Adrenal gland (tissue), 19 donors: ENCODE measurements at regions of chr6 and their contacts with region 1.

Region 1: DNA sequence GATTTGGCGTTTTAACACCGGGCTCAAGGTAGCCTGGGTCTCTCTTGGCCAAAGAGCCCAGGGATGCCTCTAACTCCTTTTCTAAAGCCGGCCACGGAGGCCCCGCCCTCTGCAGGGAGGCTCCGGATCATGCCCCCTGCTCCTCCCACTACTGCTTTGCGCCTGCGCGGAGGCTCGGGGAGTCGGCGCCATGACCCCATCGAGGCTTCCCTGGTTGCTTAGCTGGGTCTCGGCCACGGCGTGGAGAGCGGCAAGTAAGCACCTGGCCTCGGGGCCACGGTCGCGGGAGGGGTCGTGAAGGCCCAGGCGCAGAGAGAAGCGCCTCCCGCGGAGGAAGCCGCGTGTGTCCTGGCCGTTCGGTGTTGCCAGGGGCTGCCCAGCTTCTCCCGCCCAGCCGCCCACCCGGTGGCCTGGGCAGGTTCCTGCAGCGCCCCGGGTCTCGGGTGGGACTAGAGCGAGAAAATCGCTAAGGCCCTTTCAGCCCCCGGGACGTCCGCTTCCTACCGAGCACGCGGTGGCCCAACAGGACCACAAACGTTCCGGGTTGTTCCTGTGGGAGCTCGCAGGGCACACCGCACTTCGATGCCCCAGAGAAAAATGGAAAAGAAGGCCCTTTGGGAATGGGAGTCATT is at the start of gene SDHAF4:
- DNase-seq: peak; percentile 90 to 95 (median 93)
- H3K4me3 ChIP-seq: peak within 1 kb of the TSS; percentile 52 to 80 (median 74)
- H3K27ac ChIP-seq: peak within 1 kb of the TSS in 4 of 5 donors; percentile 46 to 89 (median 86)
- H3K4me1 ChIP-seq: peaks cover 10 to 22% of the 10 kb centered on the region in 2 donors
- H3K27me3 ChIP-seq: no peaks in the 10 kb centered on the region
- CTCF ChIP-seq: peak in 2 of 6 experiments; percentile 30 to 35
- POLR2A ChIP-seq: peak in 1 of 2 donors; percentile 57
- total RNA-seq, gene SDHAF4: 4.2 to 47.2 (median 16.0) TPM

Region 2: DNA sequence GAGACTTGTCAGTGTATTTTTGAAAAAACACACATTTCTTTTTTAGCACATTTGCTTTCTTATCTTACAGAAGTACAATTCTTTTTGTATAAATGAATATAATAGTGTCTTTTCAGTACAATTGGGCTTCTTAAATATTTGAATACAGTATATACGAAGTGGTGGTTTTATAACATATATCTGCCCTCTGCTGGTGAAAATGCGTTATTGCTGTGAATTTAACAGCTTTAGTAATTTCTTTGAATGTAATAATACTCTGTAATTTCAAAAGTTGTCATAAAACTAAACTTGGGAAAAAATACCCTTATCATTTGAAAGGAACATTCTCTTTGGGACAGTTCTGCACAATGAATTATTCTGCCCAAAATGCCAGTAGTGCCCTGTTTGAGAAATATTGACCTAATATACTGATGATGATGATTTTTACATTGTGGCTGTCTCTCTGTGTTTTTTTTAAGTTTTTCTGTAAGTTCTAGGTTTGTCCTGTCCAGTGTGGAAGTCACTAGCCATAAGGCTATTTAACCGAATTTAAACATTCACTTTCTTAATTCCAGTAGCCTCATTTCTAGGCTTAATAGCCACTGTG is 119.8 kb after region 1 on chr6:
- intact Hi-C with region 1: loop called in 1 of 2 experiments (anchors 10 kb)
- DNase-seq: peak in 1 of 7 donors; percentile 16
- H3K4me3 ChIP-seq: no peak overlapping the region
- H3K27ac ChIP-seq: no peak overlapping the region
- H3K4me1 ChIP-seq: peaks cover 0 to 16% of the 10 kb centered on the region in 2 donors
- H3K27me3 ChIP-seq: no peaks in the 10 kb centered on the region
- CTCF ChIP-seq: peak; percentile 63 to 78 (median 73)
- POLR2A ChIP-seq: no peak

Region 3: GRCh38 chr6:71228461-71229041 is 661.7 kb after region 1 on chr6:
- intact Hi-C with region 1: no loop called
- DNase-seq: no peak
- H3K4me3 ChIP-seq: no peak overlapping the region
- H3K27ac ChIP-seq: no peak overlapping the region
- H3K4me1 ChIP-seq: no peaks in the 10 kb centered on the region
- H3K27me3 ChIP-seq: no peaks in the 10 kb centered on the region
- CTCF ChIP-seq: no peak
- POLR2A ChIP-seq: no peak